ENCODE measurements at regions of chr7 and their contacts with region 1.

Region 1: DNA sequence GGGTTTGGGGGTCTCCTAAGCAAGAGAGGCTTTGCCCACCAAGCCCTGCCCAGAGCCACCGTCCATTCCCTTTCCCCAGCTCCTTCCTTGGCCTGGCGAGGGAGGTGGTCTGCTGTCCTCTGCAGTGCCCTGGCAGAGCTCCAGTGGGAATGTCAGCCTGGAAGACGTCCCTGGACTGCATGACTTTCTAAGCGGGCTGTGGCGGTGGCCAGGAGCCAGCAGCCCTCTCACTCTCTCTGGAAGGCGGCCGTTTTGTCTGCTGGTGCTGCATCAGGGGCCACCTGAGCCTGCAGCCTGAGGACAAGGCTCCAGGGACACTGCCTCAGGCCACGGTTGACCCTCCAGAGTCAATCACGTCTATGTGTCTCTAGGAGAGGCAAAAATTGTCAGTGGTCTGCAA is 271.0 kb downstream of the SKAP2 start:
- DNase-seq: peak; percentile 68
- H3K4me3 ChIP-seq: no peak overlapping the region
- H3K27ac ChIP-seq: peak overlapping the region in 1 of 2 experiments; percentile 60; a peak in 1 of 4 replicates
- H3K4me1 ChIP-seq: peaks cover 0 to 29% of the 10 kb centered on the region in 2 experiments; a peak in 2 of 4 replicates
- H3K27me3 ChIP-seq: no peaks in the 10 kb centered on the region
- CTCF ChIP-seq: no peak
- EP300 ChIP-seq: no peak
- RAD21 ChIP-seq: 0 out of 2 replicates have a peak, but pooled peaks have one; percentile 12

Region 2: DNA sequence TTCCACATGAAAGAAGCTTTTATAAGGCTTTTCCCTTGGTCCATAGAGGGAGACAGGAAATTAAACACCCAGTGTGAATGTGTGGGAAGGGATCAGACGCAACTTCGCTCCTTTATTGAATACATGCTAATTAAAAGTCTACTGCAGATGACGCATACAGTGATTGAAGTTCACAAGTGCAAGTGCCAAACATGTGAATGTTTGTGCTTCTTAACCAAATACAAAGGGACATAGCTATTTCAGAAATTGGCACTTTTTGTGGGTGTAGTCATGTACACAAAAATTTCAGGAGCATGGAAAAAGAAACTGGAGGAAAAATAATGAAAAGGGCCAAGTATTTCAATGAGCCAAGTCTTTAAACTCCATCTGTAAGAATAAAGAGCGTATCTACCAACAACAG is 12.7 kb before region 1 on chr7:
- CTCF ChIA-PET with region 1: interaction called, 12 read pairs
- POLR2A ChIA-PET with region 1: no interaction called
- DNase-seq: no peak
- H3K4me3 ChIP-seq: no peak overlapping the region
- H3K27ac ChIP-seq: no peak overlapping the region
- H3K4me1 ChIP-seq: no peaks in the 10 kb centered on the region
- H3K27me3 ChIP-seq: no peaks in the 10 kb centered on the region
- CTCF ChIP-seq: no peak
- EP300 ChIP-seq: no peak
- RAD21 ChIP-seq: no peak

Region 3: DNA sequence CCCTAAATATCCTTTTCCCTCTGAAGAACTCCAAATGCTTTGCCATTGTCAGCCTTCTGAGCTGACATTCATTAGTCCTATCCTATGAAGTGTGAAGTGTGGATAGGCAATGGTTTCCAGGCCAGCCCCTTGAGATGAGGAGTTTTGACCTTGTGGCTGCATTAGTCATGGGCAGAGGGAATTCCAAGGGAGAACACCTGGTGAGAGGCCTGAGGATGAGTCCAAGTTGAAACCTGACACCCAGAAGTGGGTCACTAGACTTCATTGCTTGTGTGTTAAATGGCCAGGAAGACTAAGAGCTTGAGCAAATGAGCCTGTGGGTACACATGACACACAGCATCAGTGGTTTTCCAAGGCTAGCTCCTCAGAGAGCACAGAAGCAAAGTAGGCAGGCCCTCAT is 10.2 kb after region 1 on chr7:
- CTCF ChIA-PET with region 1: interaction called, 10 read pairs
- POLR2A ChIA-PET with region 1: no interaction called
- DNase-seq: no peak
- H3K4me3 ChIP-seq: no peak overlapping the region
- H3K27ac ChIP-seq: no peak overlapping the region
- H3K4me1 ChIP-seq: peaks cover 0 to 5% of the 10 kb centered on the region in 2 experiments; a peak in 2 of 4 replicates
- H3K27me3 ChIP-seq: no peaks in the 10 kb centered on the region
- CTCF ChIP-seq: no peak
- EP300 ChIP-seq: no peak
- RAD21 ChIP-seq: no peak